ENCODE measurements at regions of chr4 and their contacts with region 1.

Region 1: DNA sequence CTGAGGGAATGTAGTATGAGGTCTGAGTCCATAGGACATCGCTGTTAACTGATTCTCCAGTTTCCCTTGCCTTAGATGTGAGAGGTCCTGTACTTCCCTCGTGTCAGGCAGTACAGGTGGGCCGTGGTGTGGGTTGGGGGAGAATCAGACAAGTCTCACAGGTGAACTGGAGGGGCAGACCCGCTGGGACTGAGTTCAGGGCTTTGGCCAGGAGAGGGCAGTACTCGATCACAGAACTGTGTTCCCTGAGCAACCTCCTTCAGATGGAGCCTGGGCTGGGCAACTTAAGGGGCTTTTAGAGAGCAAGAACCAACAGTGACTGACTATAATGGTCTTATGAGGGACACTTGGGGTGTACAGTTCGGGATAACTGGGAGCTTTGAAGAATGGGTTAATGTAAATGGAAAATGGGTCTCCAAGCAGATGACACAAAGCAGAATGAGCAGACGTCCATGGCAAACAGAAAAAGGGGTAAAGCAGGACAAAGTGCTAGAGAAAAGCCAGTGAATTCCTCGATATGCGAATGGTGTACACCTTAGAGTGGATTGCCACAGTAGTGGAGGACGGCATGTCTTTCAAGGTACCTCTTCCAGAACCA is 83.6 kb downstream of the CCNG2 start:
- DNase-seq: peak; percentile 49
- ATAC-seq: peak; percentile 97
- H3K4me3 ChIP-seq: no peak overlapping the region
- H3K27ac ChIP-seq: no peak overlapping the region
- H3K4me1 ChIP-seq: no peaks in the 10 kb centered on the region
- H3K27me3 ChIP-seq: peaks cover 40% of the 10 kb centered on the region
- CTCF ChIP-seq: peak; percentile 71
- POLR2A ChIP-seq: no peak
- RAD21 ChIP-seq: peak; percentile 78

Region 2: DNA sequence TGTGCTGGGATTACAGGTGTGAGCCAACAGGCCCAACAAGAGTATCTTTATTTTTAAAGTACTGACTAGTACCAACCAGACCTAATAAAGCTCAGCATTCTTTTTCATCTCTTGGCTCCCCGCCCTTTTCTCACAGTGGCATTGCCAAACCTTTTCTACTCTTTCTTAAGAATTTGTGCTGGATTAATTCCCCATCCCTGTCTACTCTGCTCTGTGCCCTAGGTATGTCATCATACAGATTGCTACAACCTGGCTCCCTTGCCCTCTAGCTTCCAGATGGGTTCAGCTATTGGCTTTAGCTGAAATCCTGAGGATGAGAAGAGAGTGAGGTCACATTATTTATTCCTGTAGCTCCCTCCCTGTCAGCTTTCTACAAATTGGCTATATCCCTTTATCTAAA is 129.8 kb before region 1 on chr4:
- CTCF ChIA-PET with region 1: no interaction called
- POLR2A ChIA-PET with region 1: no interaction called
- dilution Hi-C with region 1: no loop called
- in situ Hi-C with region 1: no loop called
- intact Hi-C with region 1: no loop called
- DNase-seq: no peak
- ATAC-seq: no peak
- H3K4me3 ChIP-seq: no peak overlapping the region
- H3K27ac ChIP-seq: no peak overlapping the region
- H3K4me1 ChIP-seq: no peaks in the 10 kb centered on the region
- H3K27me3 ChIP-seq: peaks cover 11% of the 10 kb centered on the region
- CTCF ChIP-seq: no peak
- POLR2A ChIP-seq: no peak
- RAD21 ChIP-seq: no peak

Region 3: GRCh38 chr4:77308843-77309242 is 68.3 kb after region 1 on chr4:
- CTCF ChIA-PET with region 1: no interaction called
- POLR2A ChIA-PET with region 1: no interaction called
- dilution Hi-C with region 1: no loop called
- in situ Hi-C with region 1: no loop called
- intact Hi-C with region 1: loop called (anchors 1 kb)
- DNase-seq: peak; percentile 35
- ATAC-seq: peak; percentile 77
- H3K4me3 ChIP-seq: no peak overlapping the region
- H3K27ac ChIP-seq: no peak overlapping the region
- H3K4me1 ChIP-seq: no peaks in the 10 kb centered on the region
- H3K27me3 ChIP-seq: no peaks in the 10 kb centered on the region; the same call in 1 of the 2 replicates
- CTCF ChIP-seq: peak; percentile 54
- POLR2A ChIP-seq: no peak
- RAD21 ChIP-seq: peak; percentile 55

Region 4: GRCh38 chr4:77358315-77358928 is 117.9 kb after region 1 on chr4:
- CTCF ChIA-PET with region 1: interaction called, 18 read pairs
- POLR2A ChIA-PET with region 1: no interaction called
- dilution Hi-C with region 1: no loop called
- in situ Hi-C with region 1: no loop called
- intact Hi-C with region 1: loop called (anchors 1 kb)
- DNase-seq: peak; percentile 40
- ATAC-seq: peak; percentile 85
- H3K4me3 ChIP-seq: no peak overlapping the region
- H3K27ac ChIP-seq: no peak overlapping the region
- H3K4me1 ChIP-seq: no peaks in the 10 kb centered on the region
- H3K27me3 ChIP-seq: peaks cover 5% of the 10 kb centered on the region
- CTCF ChIP-seq: peak; percentile 61
- POLR2A ChIP-seq: no peak
- RAD21 ChIP-seq: peak; percentile 54

Region 5: GRCh38 chr4:77618383-77619122 is 378.0 kb after region 1 on chr4:
- CTCF ChIA-PET with region 1: no interaction called
- POLR2A ChIA-PET with region 1: no interaction called
- dilution Hi-C with region 1: no loop called
- in situ Hi-C with region 1: no loop called
- intact Hi-C with region 1: loop called (anchors 10 kb)
- DNase-seq: peak; percentile 58
- ATAC-seq: peak; percentile 99
- H3K4me3 ChIP-seq: no peak overlapping the region
- H3K27ac ChIP-seq: no peak overlapping the region
- H3K4me1 ChIP-seq: no peaks in the 10 kb centered on the region
- H3K27me3 ChIP-seq: peaks cover 20% of the 10 kb centered on the region
- CTCF ChIP-seq: peak; percentile 69
- POLR2A ChIP-seq: no peak
- RAD21 ChIP-seq: peak; percentile 62

Region 6: GRCh38 chr4:77636902-77637301 is 396.3 kb after region 1 on chr4:
- CTCF ChIA-PET with region 1: no interaction called
- POLR2A ChIA-PET with region 1: no interaction called
- dilution Hi-C with region 1: no loop called
- in situ Hi-C with region 1: no loop called
- intact Hi-C with region 1: no loop called
- DNase-seq: peak; percentile 79
- ATAC-seq: peak; percentile 75
- H3K4me3 ChIP-seq: no peak overlapping the region
- H3K27ac ChIP-seq: no peak overlapping the region
- H3K4me1 ChIP-seq: 0 out of 2 replicates have a peak, but pooled peaks cover 2% of the 10 kb centered on the region
- H3K27me3 ChIP-seq: peaks cover 2% of the 10 kb centered on the region; the same call in 1 of the 2 replicates
- CTCF ChIP-seq: no peak
- POLR2A ChIP-seq: no peak
- RAD21 ChIP-seq: no peak